Transverse colon (tissue), 4 donors: ENCODE measurements at regions of chr2 and their contacts with region 1.

Region 1: GRCh38 chr2:115635430-115635829 is 1193.0 kb downstream of the DPP10 start:
- DNase-seq: no peak
- H3K4me3 ChIP-seq: no peak overlapping the region
- H3K27ac ChIP-seq: no peak overlapping the region
- H3K4me1 ChIP-seq: no peaks in the 10 kb centered on the region
- H3K27me3 ChIP-seq: no peaks in the 10 kb centered on the region
- CTCF ChIP-seq: no peak
- EP300 ChIP-seq: no peak
- POLR2A ChIP-seq: no peak

Region 2: GRCh38 chr2:115694651-115695050 is 59.2 kb after region 1 on chr2:
- in situ Hi-C with region 1: no loop called
- intact Hi-C with region 1: loop called (anchors 2 kb)
- DNase-seq: no peak
- H3K4me3 ChIP-seq: no peak overlapping the region
- H3K27ac ChIP-seq: no peak overlapping the region
- H3K4me1 ChIP-seq: no peaks in the 10 kb centered on the region
- H3K27me3 ChIP-seq: no peaks in the 10 kb centered on the region
- CTCF ChIP-seq: no peak
- EP300 ChIP-seq: no peak
- POLR2A ChIP-seq: no peak